ENCODE measurements at regions of chr10 and their contacts with region 1.

Region 1: DNA sequence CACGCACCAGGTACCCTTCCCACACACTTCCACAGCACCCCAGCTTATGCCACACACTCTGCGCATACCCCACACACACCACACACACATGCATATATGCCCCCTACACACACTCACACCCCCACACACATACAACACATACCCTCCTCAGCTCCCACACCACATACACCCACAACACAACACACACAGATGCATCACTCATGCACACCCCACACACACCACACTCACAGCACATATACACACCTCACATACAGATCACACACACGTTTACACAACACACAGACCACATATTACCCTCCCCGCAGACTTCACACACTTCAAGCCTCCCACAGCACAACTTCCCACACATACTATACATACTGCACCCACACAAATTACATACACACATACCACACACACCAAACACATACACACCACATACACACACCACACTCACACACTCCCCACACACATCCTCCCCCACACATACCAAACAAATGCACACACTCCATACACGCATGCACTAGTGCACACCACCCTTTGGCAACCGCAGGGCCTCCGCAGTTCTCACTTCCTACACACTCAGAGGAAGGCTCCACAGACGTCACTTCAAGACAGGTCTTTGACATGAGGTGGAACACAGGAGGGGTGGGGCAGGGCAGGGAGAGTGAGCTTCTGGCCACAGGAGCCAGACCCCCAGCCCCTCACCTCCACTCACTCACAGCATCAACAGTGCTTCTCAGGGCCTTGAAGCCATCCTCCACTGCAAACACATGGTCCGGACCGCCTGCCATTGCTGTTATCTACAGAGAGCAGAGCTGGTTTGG is 18.5 kb upstream of the ANTXRL start:
- DNase-seq: peak; percentile 27 to 76 (median 67)
- H3K4me3 ChIP-seq: peak overlapping the region; percentile 58 to 67
- H3K4me3 Mint-ChIP-seq: no peak overlapping the region
- H3K27ac ChIP-seq: peak overlapping the region; percentile 62
- H3K27ac Mint-ChIP-seq: no peak overlapping the region
- H3K4me1 ChIP-seq: peaks cover 70% of the 10 kb centered on the region
- H3K4me1 Mint-ChIP-seq: peaks cover 33 to 64% (median 42%) of the 10 kb centered on the region in 4 donors
- H3K27me3 ChIP-seq: no peaks in the 10 kb centered on the region
- H3K27me3 Mint-ChIP-seq: no peaks in the 10 kb centered on the region

Region 2: DNA sequence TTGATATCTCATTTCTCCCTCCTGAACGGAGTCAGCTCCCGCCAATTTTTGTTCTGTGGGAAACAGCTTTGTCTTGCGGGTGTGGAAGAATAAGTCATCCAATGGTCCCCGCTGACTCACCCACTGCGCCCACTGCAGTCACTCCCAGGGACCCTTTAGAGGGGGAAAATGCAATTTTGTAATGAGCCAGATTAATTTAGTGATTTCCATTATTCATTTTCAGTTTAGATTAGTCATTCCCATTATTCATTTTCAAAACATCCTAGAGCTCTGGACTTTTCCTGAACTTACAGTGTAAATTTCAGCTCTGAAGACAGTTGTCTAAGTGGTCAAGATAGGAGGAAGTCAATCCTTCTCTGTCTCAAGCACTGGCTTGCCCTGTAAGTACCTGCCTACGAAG is 1512.1 kb before region 1 on chr10:
- CTCF ChIA-PET with region 1: no interaction called
- POLR2A ChIA-PET with region 1: no interaction called
- intact Hi-C with region 1: no loop called
- DNase-seq: no peak
- H3K4me3 ChIP-seq: no peak overlapping the region
- H3K4me3 Mint-ChIP-seq: no peak overlapping the region
- H3K27ac ChIP-seq: no peak overlapping the region
- H3K27ac Mint-ChIP-seq: no peak overlapping the region
- H3K4me1 ChIP-seq: no peaks in the 10 kb centered on the region
- H3K4me1 Mint-ChIP-seq: no peaks in the 10 kb centered on the region
- H3K27me3 ChIP-seq: no peaks in the 10 kb centered on the region
- H3K27me3 Mint-ChIP-seq: peaks cover 0 to 1% of the 10 kb centered on the region in 2 donors

Region 3: DNA sequence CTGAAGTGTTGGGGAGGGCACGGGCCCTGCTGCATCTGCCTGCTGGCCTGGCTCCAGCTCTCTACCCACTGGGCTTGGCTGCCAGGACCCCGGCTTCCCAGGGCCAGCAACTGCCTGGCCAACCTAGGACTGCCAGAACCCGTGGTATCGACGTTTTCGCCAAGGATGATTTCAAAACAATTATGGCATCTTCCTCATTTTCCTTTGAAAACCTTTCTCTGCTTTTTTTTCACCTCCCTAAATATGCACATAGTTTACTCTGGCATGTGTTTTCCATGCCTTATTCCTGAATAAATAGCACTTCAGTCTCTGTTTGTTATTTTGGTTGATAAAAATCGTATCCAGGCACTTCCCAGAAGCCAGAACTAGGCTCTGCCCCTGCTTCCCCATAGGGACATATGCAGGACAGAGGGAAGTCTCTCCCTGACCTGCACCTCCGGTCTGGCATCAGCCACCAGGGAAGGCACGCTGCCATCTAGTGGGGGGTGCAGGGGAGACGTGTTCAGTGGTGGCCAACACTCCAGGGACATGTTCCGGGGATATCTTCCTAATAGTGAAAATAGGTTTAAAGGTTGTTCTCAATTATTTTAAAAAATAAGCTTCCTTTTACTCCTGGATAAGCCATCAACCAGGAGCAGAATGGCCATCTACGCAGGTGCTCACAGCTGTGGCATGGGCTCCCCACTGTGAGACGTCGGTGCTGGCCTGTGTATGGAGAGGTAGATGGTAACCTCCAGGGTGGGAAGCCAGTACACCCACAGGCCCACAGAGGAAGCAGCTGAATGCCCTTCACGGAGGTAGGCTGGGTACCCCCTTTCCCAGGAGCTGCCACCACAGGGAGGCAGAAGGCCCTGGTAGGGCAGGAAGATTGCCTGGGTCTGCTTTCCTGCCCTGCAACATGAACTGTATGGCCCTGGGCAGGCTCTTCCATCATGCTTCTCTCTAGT is 12.2 kb before region 1 on chr10:
- CTCF ChIA-PET with region 1: interaction called, 12 read pairs
- POLR2A ChIA-PET with region 1: interaction called, 4 read pairs
- intact Hi-C with region 1: no loop called
- DNase-seq: peak; percentile 15 to 46 (median 22)
- H3K4me3 ChIP-seq: no peak overlapping the region
- H3K4me3 Mint-ChIP-seq: no peak overlapping the region
- H3K27ac ChIP-seq: no peak overlapping the region
- H3K27ac Mint-ChIP-seq: peak overlapping the region; percentile 41 to 83 (median 73)
- H3K4me1 ChIP-seq: peaks cover 4% of the 10 kb centered on the region
- H3K4me1 Mint-ChIP-seq: peaks cover 22 to 35% (median 33%) of the 10 kb centered on the region in 4 donors
- H3K27me3 ChIP-seq: no peaks in the 10 kb centered on the region
- H3K27me3 Mint-ChIP-seq: no peaks in the 10 kb centered on the region

Region 4: DNA sequence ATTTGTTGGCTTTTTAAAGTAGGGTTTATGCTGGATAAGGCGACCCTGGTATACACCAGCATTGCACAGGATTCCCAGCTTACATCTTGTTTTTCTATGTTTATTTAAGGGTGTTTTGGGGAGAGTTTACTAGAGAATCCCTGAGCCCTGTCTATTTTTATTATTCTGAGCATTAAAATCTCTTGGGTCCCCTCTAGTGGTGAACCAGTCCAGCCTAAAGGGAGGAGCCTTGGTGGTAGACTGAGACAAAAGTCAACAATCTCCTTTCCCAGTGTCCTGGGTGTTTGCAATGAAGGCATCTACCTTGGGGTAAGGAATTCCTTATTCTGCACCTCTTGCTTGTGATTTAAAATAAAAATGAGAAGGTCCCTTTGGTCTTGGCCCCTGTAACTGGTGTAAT is 56.7 kb after region 1 on chr10:
- CTCF ChIA-PET with region 1: no interaction called
- POLR2A ChIA-PET with region 1: interaction called, 4 read pairs
- intact Hi-C with region 1: loop called (anchors 5 kb)
- DNase-seq: peak in 2 of 5 donors; percentile 10 to 17
- H3K4me3 ChIP-seq: no peak overlapping the region
- H3K4me3 Mint-ChIP-seq: no peak overlapping the region
- H3K27ac ChIP-seq: no peak overlapping the region
- H3K27ac Mint-ChIP-seq: no peak overlapping the region
- H3K4me1 ChIP-seq: no peaks in the 10 kb centered on the region
- H3K4me1 Mint-ChIP-seq: no peaks in the 10 kb centered on the region
- H3K27me3 ChIP-seq: no peaks in the 10 kb centered on the region
- H3K27me3 Mint-ChIP-seq: no peaks in the 10 kb centered on the region

Measured in CD4-positive, alpha-beta memory T cell (primary cell).